Activated B cell treated with CpG ODN at 0.5 μM for 24 hours (primary cell): ENCODE measurements at regions of chr10 and their contacts with region 1.

Region 1: DNA sequence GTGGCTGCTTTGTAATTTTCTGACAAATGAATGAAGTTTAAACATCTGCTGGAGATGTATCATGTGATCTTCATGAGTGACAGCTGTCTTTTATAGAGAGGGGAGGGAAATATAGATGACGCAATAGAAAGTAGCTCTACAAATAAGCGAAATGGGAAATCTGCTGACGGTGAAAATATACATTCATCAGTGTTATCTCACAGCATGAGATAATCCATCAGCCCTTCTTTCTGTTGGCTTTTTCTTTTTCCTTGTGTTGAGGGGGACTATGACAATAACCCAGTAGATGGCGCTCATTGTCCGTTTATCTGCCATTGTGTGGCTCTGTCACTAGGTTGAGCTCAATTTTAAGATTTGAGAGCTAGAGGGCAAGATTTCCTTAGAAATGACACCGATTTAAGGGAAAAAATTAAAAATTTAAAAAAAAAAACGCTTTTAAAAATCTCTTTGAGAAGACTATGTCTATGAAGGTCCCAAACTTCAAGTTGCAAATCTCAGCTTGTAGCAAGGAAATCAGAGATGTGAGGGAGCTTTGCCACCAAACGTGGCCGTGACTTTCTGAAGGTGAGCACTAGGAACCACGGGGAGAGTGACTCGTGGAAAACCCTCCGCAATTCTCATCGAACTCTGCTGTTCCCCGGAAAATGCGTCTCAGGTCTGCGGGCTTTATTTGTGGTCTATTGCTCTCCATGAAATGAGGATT is 114.6 kb upstream of the SFMBT2 start:
- DNase-seq: no peak
- ATAC-seq: peak; percentile 82
- H3K4me3 Mint-ChIP-seq: no peak overlapping the region
- H3K27ac Mint-ChIP-seq: no peak overlapping the region
- H3K4me1 Mint-ChIP-seq: peaks cover 14% of the 10 kb centered on the region
- H3K27me3 Mint-ChIP-seq: peaks cover 4% of the 10 kb centered on the region
- CTCF ChIP-seq: no peak

Region 2: GRCh38 chr10:7260412-7260900 is 265.0 kb before region 1 on chr10:
- CTCF ChIA-PET with region 1: no interaction called
- POLR2A ChIA-PET with region 1: no interaction called
- intact Hi-C with region 1: loop called (anchors 1 kb)
- DNase-seq: no peak
- ATAC-seq: peak; percentile 81
- H3K4me3 Mint-ChIP-seq: no peak overlapping the region
- H3K27ac Mint-ChIP-seq: no peak overlapping the region
- H3K4me1 Mint-ChIP-seq: peaks cover 29% of the 10 kb centered on the region
- H3K27me3 Mint-ChIP-seq: no peaks in the 10 kb centered on the region
- CTCF ChIP-seq: peak; percentile 53

Region 3: GRCh38 chr10:7484456-7485243 is 40.8 kb before region 1 on chr10:
- CTCF ChIA-PET with region 1: no interaction called
- POLR2A ChIA-PET with region 1: interaction called, 3 read pairs
- intact Hi-C with region 1: loop called (anchors 2 kb)
- DNase-seq: no peak
- ATAC-seq: peak; percentile 32
- H3K4me3 Mint-ChIP-seq: peak overlapping the region; percentile 76
- H3K27ac Mint-ChIP-seq: peak overlapping the region; percentile 53
- H3K4me1 Mint-ChIP-seq: peaks cover 64% of the 10 kb centered on the region
- H3K27me3 Mint-ChIP-seq: no peaks in the 10 kb centered on the region
- CTCF ChIP-seq: no peak

Region 4: DNA sequence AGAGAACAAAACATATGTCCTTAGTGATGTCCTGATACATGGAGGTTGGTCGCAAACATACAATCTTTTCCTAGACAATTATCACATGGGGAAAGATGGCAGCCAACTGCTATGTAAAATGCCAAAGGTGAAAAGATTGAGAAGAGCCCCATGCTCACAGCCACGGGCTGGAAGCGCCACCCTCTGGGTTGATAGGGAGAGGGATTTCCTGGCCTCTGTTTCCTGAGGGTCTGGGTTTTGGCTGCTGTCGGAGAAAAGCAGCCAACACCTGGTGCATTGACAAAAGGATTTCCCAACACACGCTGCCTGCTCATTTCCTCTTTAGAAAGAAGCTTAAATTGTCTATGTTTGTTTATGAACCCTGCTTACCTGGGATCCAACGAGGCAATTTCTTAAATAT is 97.5 kb after region 1 on chr10:
- CTCF ChIA-PET with region 1: no interaction called
- POLR2A ChIA-PET with region 1: no interaction called
- intact Hi-C with region 1: loop called (anchors 1 kb)
- DNase-seq: no peak
- ATAC-seq: no peak
- H3K4me3 Mint-ChIP-seq: no peak overlapping the region
- H3K27ac Mint-ChIP-seq: no peak overlapping the region
- H3K4me1 Mint-ChIP-seq: peaks cover 5% of the 10 kb centered on the region
- H3K27me3 Mint-ChIP-seq: peaks cover 2% of the 10 kb centered on the region
- CTCF ChIP-seq: no peak

Region 5: DNA sequence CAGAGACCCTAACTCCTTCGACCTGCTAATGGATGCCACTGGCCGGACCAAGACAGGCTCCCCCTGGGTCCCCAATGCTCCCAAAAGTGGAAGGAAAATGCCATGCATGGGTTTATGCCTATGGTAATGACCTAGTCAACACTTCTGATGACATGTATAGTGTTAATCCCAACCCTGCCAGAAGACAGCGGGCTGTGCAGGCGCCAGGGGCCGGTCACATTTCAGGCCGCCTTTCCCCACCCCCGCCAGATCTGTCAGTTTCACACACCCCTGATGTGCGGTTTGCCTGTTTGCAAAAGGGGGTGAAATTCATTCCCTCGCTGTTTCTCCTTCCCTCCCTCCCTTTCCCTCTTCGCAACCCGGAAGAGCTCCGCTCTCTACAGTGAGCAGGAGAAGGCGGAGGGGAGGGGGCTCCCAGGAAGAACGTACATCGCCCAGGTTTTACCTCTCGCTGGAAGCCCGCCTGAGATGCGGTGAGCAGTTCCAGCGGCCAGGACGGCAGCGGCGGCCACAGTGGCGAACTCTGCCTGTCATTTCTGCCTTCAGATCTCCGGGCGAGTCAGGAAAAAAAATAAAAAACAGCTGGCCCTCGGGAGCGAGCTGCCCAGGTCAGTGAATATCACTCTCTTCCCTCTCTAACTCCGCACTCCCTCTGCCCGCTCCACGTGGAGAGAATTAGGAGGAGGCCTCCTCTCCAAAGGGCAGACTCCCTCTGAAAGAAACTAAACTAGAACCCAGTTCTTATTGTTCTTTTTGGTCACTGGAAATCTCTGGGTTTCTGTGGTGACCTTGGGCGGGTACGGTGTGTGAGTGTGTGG is 519.7 kb after region 1 on chr10:
- CTCF ChIA-PET with region 1: no interaction called
- POLR2A ChIA-PET with region 1: no interaction called
- intact Hi-C with region 1: loop called (anchors 10 kb)
- DNase-seq: no peak
- ATAC-seq: no peak
- H3K4me3 Mint-ChIP-seq: peak overlapping the region; percentile 3
- H3K27ac Mint-ChIP-seq: no peak overlapping the region
- H3K4me1 Mint-ChIP-seq: peaks cover 49% of the 10 kb centered on the region
- H3K27me3 Mint-ChIP-seq: peaks cover 81% of the 10 kb centered on the region
- CTCF ChIP-seq: no peak

Region 6: GRCh38 chr10:9302120-9302746 is 1776.8 kb after region 1 on chr10:
- CTCF ChIA-PET with region 1: interaction called, 7 read pairs
- POLR2A ChIA-PET with region 1: no interaction called
- intact Hi-C with region 1: loop called (anchors 1 kb)
- DNase-seq: no peak
- ATAC-seq: no peak
- H3K4me3 Mint-ChIP-seq: no peak overlapping the region
- H3K27ac Mint-ChIP-seq: no peak overlapping the region
- H3K4me1 Mint-ChIP-seq: no peaks in the 10 kb centered on the region
- H3K27me3 Mint-ChIP-seq: peaks cover 8% of the 10 kb centered on the region
- CTCF ChIP-seq: peak; percentile 33